ENCODE measurements at regions of chr20 and their contacts with region 1.

Region 1: GRCh38 chr20:62822788-62823651 is 6.2 kb downstream of the COL9A3 start:
- DNase-seq: peak; percentile 88
- ATAC-seq: peak; percentile 72
- H3K4me3 ChIP-seq: no peak overlapping the region
- H3K27ac ChIP-seq: no peak overlapping the region
- H3K4me1 ChIP-seq: peaks cover 23% of the 10 kb centered on the region
- H3K27me3 ChIP-seq: no peaks in the 10 kb centered on the region
- CTCF ChIP-seq: peak; percentile 88

Region 2: GRCh38 chr20:62776692-62777527 is 46.1 kb before region 1 on chr20:
- CTCF ChIA-PET with region 1: no interaction called
- POLR2A ChIA-PET with region 1: no interaction called
- intact Hi-C with region 1: no loop called
- DNase-seq: peak; percentile 62
- ATAC-seq: peak; percentile 68
- H3K4me3 ChIP-seq: no peak overlapping the region
- H3K27ac ChIP-seq: no peak overlapping the region
- H3K4me1 ChIP-seq: peaks cover 5% of the 10 kb centered on the region; the same call in 1 of the 2 replicates
- H3K27me3 ChIP-seq: no peaks in the 10 kb centered on the region
- CTCF ChIP-seq: no peak

Region 3: GRCh38 chr20:62787321-62787720 is 35.7 kb before region 1 on chr20:
- CTCF ChIA-PET with region 1: no interaction called
- POLR2A ChIA-PET with region 1: no interaction called
- intact Hi-C with region 1: no loop called
- DNase-seq: no peak
- ATAC-seq: no peak
- H3K4me3 ChIP-seq: no peak overlapping the region
- H3K27ac ChIP-seq: no peak overlapping the region
- H3K4me1 ChIP-seq: peaks cover 11% of the 10 kb centered on the region
- H3K27me3 ChIP-seq: no peaks in the 10 kb centered on the region
- CTCF ChIP-seq: no peak

Region 4: GRCh38 chr20:62834967-62835730 is 12.1 kb after region 1 on chr20:
- CTCF ChIA-PET with region 1: interaction called, 11 read pairs
- POLR2A ChIA-PET with region 1: interaction called, 7 read pairs
- intact Hi-C with region 1: loop called (anchors 2 kb)
- DNase-seq: no peak
- ATAC-seq: no peak
- H3K4me3 ChIP-seq: no peak overlapping the region
- H3K27ac ChIP-seq: no peak overlapping the region
- H3K4me1 ChIP-seq: peaks cover 28% of the 10 kb centered on the region
- H3K27me3 ChIP-seq: no peaks in the 10 kb centered on the region
- CTCF ChIP-seq: no peak

Region 5: GRCh38 chr20:62840244-62841197 is 17.5 kb after region 1 on chr20:
- CTCF ChIA-PET with region 1: interaction called, 3 read pairs
- POLR2A ChIA-PET with region 1: interaction called, 7 read pairs
- intact Hi-C with region 1: loop called (anchors 2 kb)
- DNase-seq: peak; percentile 47
- ATAC-seq: peak; percentile 82
- H3K4me3 ChIP-seq: no peak overlapping the region
- H3K27ac ChIP-seq: no peak overlapping the region
- H3K4me1 ChIP-seq: peaks cover 33% of the 10 kb centered on the region
- H3K27me3 ChIP-seq: no peaks in the 10 kb centered on the region
- CTCF ChIP-seq: no peak

Region 6: GRCh38 chr20:62860924-62861691 is 38.1 kb after region 1 on chr20:
- CTCF ChIA-PET with region 1: interaction called, 8 read pairs
- POLR2A ChIA-PET with region 1: interaction called, 5 read pairs
- intact Hi-C with region 1: loop called (anchors 1 kb)
- DNase-seq: no peak
- ATAC-seq: peak; percentile 41
- H3K4me3 ChIP-seq: peak overlapping the region; percentile 81
- H3K27ac ChIP-seq: no peak overlapping the region
- H3K4me1 ChIP-seq: peaks cover 16% of the 10 kb centered on the region
- H3K27me3 ChIP-seq: no peaks in the 10 kb centered on the region
- CTCF ChIP-seq: no peak

Region 7: DNA sequence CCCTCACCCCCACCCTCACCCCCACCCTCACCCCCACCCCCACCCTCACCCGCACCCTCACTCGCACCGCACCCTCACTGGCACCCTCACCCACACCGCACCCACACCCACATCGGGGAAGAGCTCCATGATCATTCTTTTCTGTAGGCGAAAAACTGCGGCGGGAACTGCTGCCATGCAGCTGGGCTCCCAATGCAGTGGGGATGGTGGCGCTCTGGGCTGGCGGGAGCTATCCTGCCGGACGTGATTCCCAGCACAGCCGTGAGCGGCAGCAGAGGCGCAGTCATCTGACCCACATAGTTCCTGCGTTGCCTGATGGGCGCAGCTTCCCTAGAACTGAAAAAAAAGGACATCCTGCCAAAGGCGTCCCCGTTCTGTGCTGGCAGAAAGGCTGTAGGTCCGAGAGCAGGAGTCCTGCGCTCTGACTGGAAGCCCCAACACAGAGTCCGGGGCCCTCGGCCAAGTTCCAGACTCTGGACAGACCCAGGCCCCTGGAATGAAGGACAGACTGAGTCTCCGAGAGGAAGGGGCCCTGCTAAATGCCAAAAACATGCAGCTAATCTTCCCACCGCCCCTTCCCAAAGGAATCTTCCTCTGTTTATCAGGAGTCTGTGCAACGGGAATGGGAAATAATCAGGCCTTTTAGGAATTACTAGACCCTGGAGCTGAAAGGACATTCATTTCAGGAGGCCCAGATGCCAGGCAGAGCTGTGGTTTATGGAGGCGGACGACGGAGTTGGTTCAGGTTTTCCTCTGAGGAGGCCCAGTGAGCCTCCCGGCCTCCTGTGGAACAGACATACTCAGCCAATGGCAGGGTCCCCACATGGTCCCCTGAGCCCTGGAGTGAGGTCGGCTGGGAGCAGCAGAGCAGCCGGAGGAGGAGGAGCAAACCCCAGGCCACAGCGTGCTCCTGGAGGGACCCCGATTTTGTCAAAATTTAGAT is 52.7 kb after region 1 on chr20:
- CTCF ChIA-PET with region 1: interaction called, 10 read pairs
- POLR2A ChIA-PET with region 1: no interaction called
- intact Hi-C with region 1: no loop called
- DNase-seq: peak; percentile 87
- ATAC-seq: peak; percentile 98
- H3K4me3 ChIP-seq: no peak overlapping the region; the same call in 1 of the 2 replicates
- H3K27ac ChIP-seq: peak overlapping the region; percentile 23; the same call in 1 of the 2 replicates
- H3K4me1 ChIP-seq: peaks cover 6% of the 10 kb centered on the region; the same call in 1 of the 2 replicates
- H3K27me3 ChIP-seq: no peaks in the 10 kb centered on the region
- CTCF ChIP-seq: peak; percentile 69

Region 8: GRCh38 chr20:62926239-62927104 is 103.5 kb after region 1 on chr20 and contains the start of gene DIDO1:
- CTCF ChIA-PET with region 1: interaction called, 3 read pairs
- POLR2A ChIA-PET with region 1: no interaction called
- intact Hi-C with region 1: loop called (anchors 10 kb)
- DNase-seq: peak; percentile 91
- ATAC-seq: peak; percentile 75
- H3K4me3 ChIP-seq: peak within 1 kb of the TSS; percentile 80
- H3K27ac ChIP-seq: peak within 1 kb of the TSS; percentile 78
- H3K4me1 ChIP-seq: peaks cover 27% of the 10 kb centered on the region
- H3K27me3 ChIP-seq: no peaks in the 10 kb centered on the region
- CTCF ChIP-seq: peak; percentile 57
- total RNA-seq, gene DIDO1: 33.2 and 40.4 TPM in 2 replicates